ENCODE measurements at regions of chr7 and their contacts with region 1.

Region 1: DNA sequence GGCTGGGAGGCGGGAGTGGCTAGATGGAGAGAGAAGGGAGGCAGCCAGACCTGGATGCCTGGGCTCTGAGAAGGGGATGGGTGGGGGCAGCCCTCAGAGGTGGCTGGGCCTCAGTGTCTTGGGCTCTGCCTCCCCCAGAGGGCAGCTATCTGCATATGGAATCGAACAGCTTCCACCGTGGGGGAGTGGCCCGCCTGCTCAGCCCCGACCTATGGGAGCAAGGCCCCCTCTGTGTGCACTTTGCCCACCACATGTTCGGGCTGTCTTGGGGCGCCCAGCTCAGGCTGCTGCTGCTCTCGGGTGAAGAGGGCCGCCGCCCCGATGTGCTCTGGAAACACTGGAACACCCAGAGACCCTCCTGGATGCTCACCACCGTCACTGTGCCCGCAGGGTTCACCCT is 3.3 kb downstream of the ZAN start:
- H3K4me3 ChIP-seq: no peak overlapping the region
- H3K27ac ChIP-seq: no peak overlapping the region
- H3K4me1 ChIP-seq: 0 out of 2 replicates have a peak, but pooled peaks cover 4% of the 10 kb centered on the region
- CTCF ChIP-seq: no peak

Region 2: DNA sequence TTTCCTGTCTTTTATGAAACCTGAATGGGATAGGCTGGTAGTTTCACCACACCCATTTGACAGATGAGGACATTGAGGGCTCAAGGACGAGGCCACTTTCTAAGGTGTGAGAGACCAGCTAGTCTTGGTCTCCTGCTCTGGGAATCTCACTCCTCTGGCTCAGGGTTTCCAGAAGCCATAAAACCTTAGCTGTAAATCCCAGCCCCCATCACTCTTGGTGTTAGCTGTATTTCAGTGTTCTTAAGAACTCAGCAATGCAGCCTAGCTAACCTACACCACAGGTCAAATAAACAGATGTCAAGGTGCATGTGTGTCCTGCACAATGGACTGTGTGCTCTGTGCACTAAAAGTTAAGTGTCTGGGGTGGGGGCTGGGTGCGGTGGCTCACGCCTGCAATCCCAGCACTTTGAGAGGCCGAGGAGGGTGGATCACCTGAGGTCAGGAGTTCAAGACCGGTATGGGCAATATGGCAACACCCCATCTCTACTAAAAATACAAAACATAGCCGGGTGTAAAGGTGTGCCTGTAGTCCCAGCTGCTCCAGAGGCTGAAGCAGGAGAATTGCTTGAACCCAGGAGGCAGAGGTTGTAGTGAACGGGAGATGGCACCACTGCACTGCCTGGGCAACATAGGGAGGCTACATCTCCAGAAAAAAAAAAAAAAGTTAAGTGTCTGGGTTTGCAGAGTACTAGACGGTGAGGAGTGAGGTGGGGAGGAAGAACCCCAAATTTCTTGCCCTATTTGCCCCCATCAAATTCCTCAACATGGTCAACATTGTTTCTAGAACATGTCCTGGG is 16.9 kb before region 1 on chr7:
- CTCF ChIA-PET with region 1: interaction called, 12 read pairs
- POLR2A ChIA-PET with region 1: no interaction called
- H3K4me3 ChIP-seq: no peak overlapping the region
- H3K27ac ChIP-seq: no peak overlapping the region
- H3K4me1 ChIP-seq: no peaks in the 10 kb centered on the region
- CTCF ChIP-seq: no peak

Region 3: GRCh38 chr7:100781255-100781654 is 44.6 kb after region 1 on chr7:
- CTCF ChIA-PET with region 1: no interaction called
- POLR2A ChIA-PET with region 1: no interaction called
- H3K4me3 ChIP-seq: no peak overlapping the region
- H3K27ac ChIP-seq: no peak overlapping the region
- H3K4me1 ChIP-seq: no peaks in the 10 kb centered on the region
- CTCF ChIP-seq: no peak

Measured in HEK293 (cell line).